SK-N-SH (cell line): ENCODE measurements at regions of chr1 and their contacts with region 1.

Region 1: GRCh38 chr1:116418091-116418830 is 45.2 kb downstream of the ATP1A1 start:
- DNase-seq: peak; percentile 89
- H3K4me3 ChIP-seq: peak overlapping the region; percentile 80 to 90
- H3K27ac ChIP-seq: peak overlapping the region in 1 of 2 experiments; percentile 90; a peak in 3 of 4 replicates
- H3K4me1 ChIP-seq: peaks cover 7 to 24% of the 10 kb centered on the region in 2 experiments; a peak in 3 of 4 replicates
- H3K27me3 ChIP-seq: no peaks in the 10 kb centered on the region
- CTCF ChIP-seq: no peak
- EP300 ChIP-seq: no peak; a peak in 1 of 4 replicates
- RAD21 ChIP-seq: no peak; the same call in 1 of the 2 replicates

Region 2: DNA sequence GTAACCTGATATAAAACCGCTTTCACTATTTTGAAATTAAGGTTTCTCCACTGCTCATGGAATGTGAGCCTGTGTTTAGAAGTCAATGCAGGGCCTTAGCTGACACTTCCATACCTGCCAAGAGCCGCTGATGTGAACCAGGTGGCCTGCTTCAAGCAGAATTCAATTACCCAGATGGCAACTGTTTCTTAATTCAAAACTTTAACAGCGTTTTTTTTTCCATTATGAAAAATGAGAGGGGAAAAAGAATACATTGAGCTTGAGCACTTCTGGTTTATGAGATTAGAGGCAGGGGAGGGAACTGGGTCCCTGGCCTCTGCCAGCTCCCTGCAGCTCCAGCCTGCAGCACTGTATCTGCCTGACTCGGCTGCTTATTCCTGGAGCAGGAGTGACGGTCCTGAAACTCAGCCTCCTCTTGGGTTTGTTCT is 52.9 kb before region 1 on chr1:
- CTCF ChIA-PET with region 1: interaction called, 3 read pairs
- POLR2A ChIA-PET with region 1: interaction called, 12 read pairs
- DNase-seq: peak; percentile 78
- H3K4me3 ChIP-seq: peak overlapping the region in 1 of 2 experiments; percentile 21; a peak in 2 of 4 replicates
- H3K27ac ChIP-seq: peak overlapping the region in 1 of 2 experiments; percentile 91; a peak in 2 of 4 replicates
- H3K4me1 ChIP-seq: peaks cover 13 to 29% of the 10 kb centered on the region in 2 experiments; a peak in 3 of 4 replicates
- H3K27me3 ChIP-seq: no peaks in the 10 kb centered on the region
- CTCF ChIP-seq: no peak
- EP300 ChIP-seq: peak in 1 of 2 experiments; percentile 95; a peak in 2 of 4 replicates
- RAD21 ChIP-seq: peak; percentile 16; the same call in 1 of the 2 replicates